Transverse colon (tissue), 4 donors: ENCODE measurements at regions of chr5 and their contacts with region 1.

Region 1: GRCh38 chr5:96463106-96463505 is 30.1 kb upstream of the PCSK1 start:
- DNase-seq: no peak
- H3K4me3 ChIP-seq: no peak overlapping the region
- H3K27ac ChIP-seq: no peak overlapping the region
- H3K4me1 ChIP-seq: no peaks in the 10 kb centered on the region
- H3K27me3 ChIP-seq: no peaks in the 10 kb centered on the region
- CTCF ChIP-seq: no peak
- EP300 ChIP-seq: no peak
- POLR2A ChIP-seq: no peak

Region 2: GRCh38 chr5:96209829-96210228 is 253.3 kb before region 1 on chr5:
- in situ Hi-C with region 1: no loop called
- intact Hi-C with region 1: no loop called
- DNase-seq: no peak
- H3K4me3 ChIP-seq: no peak overlapping the region
- H3K27ac ChIP-seq: no peak overlapping the region
- H3K4me1 ChIP-seq: peaks cover 0 to 6% (median 2%) of the 10 kb centered on the region in 4 donors
- H3K27me3 ChIP-seq: no peaks in the 10 kb centered on the region
- CTCF ChIP-seq: no peak
- EP300 ChIP-seq: no peak
- POLR2A ChIP-seq: no peak

Region 3: DNA sequence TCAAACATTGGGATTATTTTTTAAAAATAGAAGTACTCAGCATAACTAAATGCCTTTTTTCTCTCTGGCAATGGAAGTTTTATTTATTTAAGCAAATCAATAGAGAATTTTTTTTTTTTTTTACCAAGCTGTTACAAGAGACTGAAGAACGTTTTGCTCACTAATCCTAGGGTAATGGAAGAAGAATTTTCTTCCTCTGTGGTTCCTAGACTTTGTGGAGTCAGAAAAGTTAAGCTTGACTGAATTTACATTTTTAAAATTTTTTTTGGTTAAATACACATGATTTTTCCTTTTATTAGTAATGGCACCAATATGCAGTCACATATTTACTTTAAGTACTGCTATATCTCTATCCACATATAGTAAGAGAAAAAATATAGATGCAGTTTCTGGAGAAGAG is 219.9 kb before region 1 on chr5:
- in situ Hi-C with region 1: no loop called
- intact Hi-C with region 1: loop called (anchors 5 kb)
- DNase-seq: no peak
- H3K4me3 ChIP-seq: no peak overlapping the region
- H3K27ac ChIP-seq: no peak overlapping the region
- H3K4me1 ChIP-seq: peaks cover 0 to 10% (median 0%) of the 10 kb centered on the region in 4 donors
- H3K27me3 ChIP-seq: no peaks in the 10 kb centered on the region
- CTCF ChIP-seq: no peak
- EP300 ChIP-seq: no peak
- POLR2A ChIP-seq: no peak

Region 4: DNA sequence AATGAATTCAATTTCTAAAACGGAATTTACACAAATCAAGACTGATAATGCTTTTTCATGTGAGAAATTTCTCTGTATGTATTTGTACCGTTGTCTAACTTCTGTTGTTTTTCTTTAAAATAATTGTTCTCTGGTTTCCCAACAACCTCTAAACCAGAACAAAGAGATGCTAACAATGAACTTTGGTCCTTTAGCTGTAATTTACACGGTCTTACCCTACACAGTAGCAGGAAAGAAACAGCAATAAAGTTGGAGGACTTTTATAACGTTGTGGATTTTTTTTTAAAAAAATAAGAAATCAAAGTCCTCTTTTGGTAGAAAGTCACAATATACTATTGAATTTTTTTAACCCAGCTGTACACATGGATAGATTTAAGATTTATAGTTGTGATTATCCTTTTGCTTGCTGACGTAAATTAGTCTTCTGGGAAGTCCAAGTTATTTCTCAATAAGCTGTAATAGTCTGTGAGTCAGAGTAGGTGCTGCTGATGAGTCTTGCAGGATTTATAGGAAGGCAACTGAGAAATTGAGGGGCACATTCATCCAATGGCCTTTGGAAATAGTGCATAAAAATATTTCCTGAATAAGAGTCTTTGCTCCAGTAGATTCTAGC is 46.7 kb after region 1 on chr5:
- in situ Hi-C with region 1: no loop called
- intact Hi-C with region 1: no loop called
- DNase-seq: no peak
- H3K4me3 ChIP-seq: no peak overlapping the region
- H3K27ac ChIP-seq: peak overlapping the region; percentile 20 to 54 (median 38)
- H3K4me1 ChIP-seq: peaks cover 0 to 16% (median 13%) of the 10 kb centered on the region in 4 donors
- H3K27me3 ChIP-seq: no peaks in the 10 kb centered on the region
- CTCF ChIP-seq: no peak
- EP300 ChIP-seq: peak; percentile 47
- POLR2A ChIP-seq: no peak

Region 5: GRCh38 chr5:96520345-96520744 is 57.2 kb after region 1 on chr5:
- in situ Hi-C with region 1: no loop called
- intact Hi-C with region 1: no loop called
- DNase-seq: no peak
- H3K4me3 ChIP-seq: no peak overlapping the region
- H3K27ac ChIP-seq: no peak overlapping the region
- H3K4me1 ChIP-seq: no peaks in the 10 kb centered on the region
- H3K27me3 ChIP-seq: no peaks in the 10 kb centered on the region
- CTCF ChIP-seq: no peak
- EP300 ChIP-seq: no peak
- POLR2A ChIP-seq: no peak

Region 6: GRCh38 chr5:97094579-97095317 is 631.6 kb after region 1 on chr5:
- in situ Hi-C with region 1: no loop called
- intact Hi-C with region 1: no loop called
- DNase-seq: no peak
- H3K4me3 ChIP-seq: no peak overlapping the region
- H3K27ac ChIP-seq: no peak overlapping the region
- H3K4me1 ChIP-seq: peaks cover 0 to 6% (median 0%) of the 10 kb centered on the region in 4 donors
- H3K27me3 ChIP-seq: no peaks in the 10 kb centered on the region
- CTCF ChIP-seq: no peak
- EP300 ChIP-seq: no peak
- POLR2A ChIP-seq: no peak